Naive thymus-derived CD4-positive, alpha-beta T cell (primary cell): ENCODE measurements at regions of chr9 and their contacts with region 1.

Region 1: GRCh38 chr9:94726495-94727191 is at the start of gene AOPEP:
- DNase-seq: peak; percentile 98 to 100 (median 99)
- ATAC-seq: peak; percentile 99
- H3K4me3 ChIP-seq: peak within 1 kb of the TSS; percentile 92
- H3K4me3 Mint-ChIP-seq: peak within 1 kb of the TSS; percentile 88 to 100 (median 98)
- H3K27ac ChIP-seq: peak within 1 kb of the TSS; percentile 82
- H3K27ac Mint-ChIP-seq: peak within 1 kb of the TSS; percentile 92 to 100 (median 98)
- H3K4me1 ChIP-seq: peaks cover 7% of the 10 kb centered on the region in 2 donors
- H3K4me1 Mint-ChIP-seq: peaks cover 7 to 24% (median 19%) of the 10 kb centered on the region in 7 donors
- H3K27me3 ChIP-seq: no peaks in the 10 kb centered on the region
- H3K27me3 Mint-ChIP-seq: peaks cover 0 to 2% (median 0%) of the 10 kb centered on the region in 5 donors
- total RNA-seq, gene AOPEP: 11.0 to 19.0 (median 14.9) TPM

Region 2: GRCh38 chr9:94259077-94259892 is 467.4 kb before region 1 on chr9 and contains the start of gene ZNF169:
- CTCF ChIA-PET with region 1: no interaction called
- POLR2A ChIA-PET with region 1: no interaction called
- intact Hi-C with region 1: loop called (anchors 2 to 5 kb)
- DNase-seq: peak; percentile 68 to 84 (median 77)
- ATAC-seq: peak; percentile 100
- H3K4me3 ChIP-seq: peak within 1 kb of the TSS; percentile 99
- H3K4me3 Mint-ChIP-seq: peak within 1 kb of the TSS; percentile 97 to 99 (median 99)
- H3K27ac ChIP-seq: peak within 1 kb of the TSS; percentile 66
- H3K27ac Mint-ChIP-seq: peak within 1 kb of the TSS; percentile 93 to 97 (median 95)
- H3K4me1 ChIP-seq: peaks cover 7% of the 10 kb centered on the region in 2 donors
- H3K4me1 Mint-ChIP-seq: peaks cover 28 to 56% (median 43%) of the 10 kb centered on the region in 7 donors
- H3K27me3 ChIP-seq: no peaks in the 10 kb centered on the region
- H3K27me3 Mint-ChIP-seq: peaks cover 4 to 15% (median 6%) of the 10 kb centered on the region in 5 donors
- total RNA-seq, gene ZNF169: 5.0 to 28.4 (median 12.9) TPM

Region 3: DNA sequence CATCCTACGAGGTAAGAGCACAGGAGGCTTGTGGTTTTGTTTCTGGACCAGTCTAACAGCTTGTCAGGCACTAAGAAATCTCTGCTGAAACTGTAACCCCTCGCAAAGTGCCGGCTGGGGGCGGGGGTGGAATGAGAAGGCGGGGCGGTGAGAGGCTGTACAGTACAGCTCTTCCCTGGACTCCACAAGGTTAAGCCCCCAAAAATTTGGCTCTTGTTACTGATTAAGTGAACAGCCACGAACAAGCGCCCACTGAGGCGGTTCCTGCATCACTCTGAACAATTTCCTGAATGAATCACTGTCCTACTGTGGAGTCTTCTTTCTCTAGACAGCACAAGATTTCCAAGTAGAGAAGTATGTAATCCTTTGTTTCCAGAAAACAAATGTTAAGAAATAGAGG is 139.8 kb before region 1 on chr9:
- CTCF ChIA-PET with region 1: no interaction called
- POLR2A ChIA-PET with region 1: no interaction called
- intact Hi-C with region 1: no loop called
- DNase-seq: no peak
- ATAC-seq: no peak
- H3K4me3 ChIP-seq: no peak overlapping the region
- H3K4me3 Mint-ChIP-seq: peak overlapping the region in 4 of 10 donors; percentile 7 to 16 (median 10)
- H3K27ac ChIP-seq: no peak overlapping the region
- H3K27ac Mint-ChIP-seq: no peak overlapping the region
- H3K4me1 ChIP-seq: peaks cover 0 to 9% of the 10 kb centered on the region in 2 donors
- H3K4me1 Mint-ChIP-seq: peaks cover 8 to 24% (median 15%) of the 10 kb centered on the region in 7 donors
- H3K27me3 ChIP-seq: no peaks in the 10 kb centered on the region
- H3K27me3 Mint-ChIP-seq: peaks cover 3 to 24% (median 11%) of the 10 kb centered on the region in 5 donors

Region 4: GRCh38 chr9:94681508-94681907 is 45.1 kb before region 1 on chr9:
- CTCF ChIA-PET with region 1: no interaction called
- POLR2A ChIA-PET with region 1: no interaction called
- intact Hi-C with region 1: loop called in 1 of 2 experiments (anchors 5 kb)
- DNase-seq: peak; percentile 20 to 63 (median 52)
- ATAC-seq: peak; percentile 94
- H3K4me3 ChIP-seq: no peak overlapping the region
- H3K4me3 Mint-ChIP-seq: no peak overlapping the region
- H3K27ac ChIP-seq: no peak overlapping the region
- H3K27ac Mint-ChIP-seq: no peak overlapping the region
- H3K4me1 ChIP-seq: no peaks in the 10 kb centered on the region
- H3K4me1 Mint-ChIP-seq: no peaks in the 10 kb centered on the region
- H3K27me3 ChIP-seq: no peaks in the 10 kb centered on the region
- H3K27me3 Mint-ChIP-seq: peaks cover 0 to 47% (median 16%) of the 10 kb centered on the region in 5 donors

Region 5: DNA sequence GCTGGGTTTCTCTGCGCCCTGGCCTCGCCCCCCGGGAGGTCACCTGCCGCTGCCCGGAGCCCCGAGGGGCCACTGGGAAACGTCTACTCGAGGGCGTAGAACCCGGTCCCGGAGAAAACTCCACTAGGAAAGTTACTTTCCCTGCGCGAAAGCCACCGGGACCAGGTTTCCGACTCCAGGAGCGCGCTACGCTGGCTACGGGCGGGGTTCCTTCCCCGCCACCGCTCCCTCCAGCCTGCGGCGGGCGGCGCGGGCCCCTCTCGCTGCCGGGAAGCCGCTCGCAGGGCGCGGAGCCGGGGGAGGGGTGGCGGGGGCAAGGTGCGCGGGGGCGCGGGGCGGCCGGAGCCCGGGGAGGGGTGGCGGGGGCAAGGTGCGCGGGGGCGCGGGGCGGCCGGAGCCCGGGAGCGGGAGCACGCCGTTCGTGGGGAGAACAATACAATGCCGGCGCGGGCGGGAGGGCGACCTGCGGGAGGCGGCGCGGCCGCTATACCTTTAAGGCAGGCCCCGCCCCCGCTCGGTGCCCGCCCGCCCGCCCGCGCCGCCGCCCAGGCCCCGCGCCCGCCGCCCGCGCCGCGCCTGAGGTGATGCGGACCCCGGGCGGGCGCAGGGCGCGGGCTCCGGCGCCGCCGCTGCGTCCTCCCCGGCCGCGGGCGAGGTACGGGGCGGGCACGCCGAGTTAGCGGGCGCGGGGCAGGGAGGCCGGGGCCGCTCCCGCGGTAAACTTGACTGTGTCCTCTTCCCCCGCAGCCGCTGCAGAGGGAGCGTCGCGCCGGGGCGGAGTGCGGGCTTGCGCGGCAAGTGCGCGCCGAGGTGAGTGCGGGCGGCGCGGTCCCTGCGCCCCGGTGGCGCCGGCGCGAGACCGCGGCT is 278.0 kb after region 1 on chr9:
- CTCF ChIA-PET with region 1: no interaction called
- POLR2A ChIA-PET with region 1: no interaction called
- intact Hi-C with region 1: loop called in 1 of 2 experiments (anchors 2 kb)
- DNase-seq: peak in 6 of 9 donors; percentile 7 to 63 (median 18)
- ATAC-seq: peak; percentile 74
- H3K4me3 ChIP-seq: peak overlapping the region; percentile 51
- H3K4me3 Mint-ChIP-seq: peak overlapping the region in 5 of 10 donors; percentile 80 to 87 (median 81)
- H3K27ac ChIP-seq: no peak overlapping the region
- H3K27ac Mint-ChIP-seq: peak overlapping the region in 1 of 9 donors; percentile 76
- H3K4me1 ChIP-seq: peaks cover 7% of the 10 kb centered on the region in 2 donors
- H3K4me1 Mint-ChIP-seq: peaks cover 0 to 27% (median 9%) of the 10 kb centered on the region in 7 donors
- H3K27me3 ChIP-seq: peaks cover 11 to 13% of the 10 kb centered on the region in 2 donors
- H3K27me3 Mint-ChIP-seq: peaks cover 28 to 41% (median 37%) of the 10 kb centered on the region in 5 donors

Region 6: DNA sequence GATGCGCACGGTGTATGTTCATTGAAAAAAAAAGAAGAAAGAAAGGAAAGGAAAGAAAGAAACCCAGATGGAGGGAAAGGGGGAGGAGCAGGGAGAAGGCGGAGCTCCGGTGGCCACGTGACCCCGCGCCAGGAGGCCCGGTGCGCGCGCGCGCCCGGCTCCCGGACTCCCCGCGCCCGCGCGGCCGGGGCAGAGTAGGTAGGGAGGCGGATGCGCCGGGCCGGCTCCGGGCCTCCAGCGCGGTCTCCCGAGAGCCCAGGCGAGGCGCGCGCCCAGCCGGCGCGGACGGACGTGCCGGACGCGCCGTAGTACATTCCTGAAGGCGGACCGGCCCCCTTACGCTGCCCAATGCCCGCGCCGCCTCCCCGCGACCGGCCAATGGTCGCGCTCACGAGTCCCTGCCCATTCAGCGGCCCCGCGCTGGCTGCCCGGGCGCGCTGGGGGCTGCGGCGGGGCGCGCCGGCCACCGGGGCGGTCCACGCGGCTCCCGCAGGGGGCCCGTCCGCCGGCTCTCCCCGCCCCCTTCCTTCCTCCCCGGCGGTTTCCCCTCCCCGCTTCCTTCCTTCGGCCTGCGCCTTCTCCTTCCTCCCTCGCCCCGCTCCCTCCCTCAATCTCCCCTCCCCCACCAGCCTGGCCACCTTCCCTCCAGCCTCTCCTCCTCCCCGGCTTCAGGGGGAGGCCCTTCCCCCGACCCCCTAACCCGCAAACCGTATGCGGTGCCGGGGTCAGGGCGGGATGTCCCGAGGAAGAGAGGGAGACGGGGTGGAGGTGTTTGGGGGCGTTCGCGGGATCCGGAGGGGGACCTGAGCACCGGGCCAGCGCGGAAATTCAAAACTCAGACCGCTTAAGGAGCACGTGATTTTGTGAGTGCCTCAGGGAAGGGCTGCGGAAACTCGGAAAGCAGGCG is 784.3 kb after region 1 on chr9:
- CTCF ChIA-PET with region 1: no interaction called
- POLR2A ChIA-PET with region 1: no interaction called
- intact Hi-C with region 1: loop called in 1 of 2 experiments (anchors 2 kb)
- DNase-seq: peak; percentile 64 to 87 (median 80)
- ATAC-seq: peak; percentile 75
- H3K4me3 ChIP-seq: peak overlapping the region; percentile 66
- H3K4me3 Mint-ChIP-seq: peak overlapping the region; percentile 90 to 100 (median 96)
- H3K27ac ChIP-seq: peak overlapping the region; percentile 58
- H3K27ac Mint-ChIP-seq: peak overlapping the region; percentile 82 to 94 (median 85)
- H3K4me1 ChIP-seq: peaks cover 14 to 18% of the 10 kb centered on the region in 2 donors
- H3K4me1 Mint-ChIP-seq: peaks cover 26 to 45% (median 39%) of the 10 kb centered on the region in 7 donors
- H3K27me3 ChIP-seq: no peaks in the 10 kb centered on the region
- H3K27me3 Mint-ChIP-seq: peaks cover 0 to 79% (median 3%) of the 10 kb centered on the region in 5 donors